IMR-90 (cell line): ENCODE measurements at regions of chr1 and their contacts with region 1.

Region 1: DNA sequence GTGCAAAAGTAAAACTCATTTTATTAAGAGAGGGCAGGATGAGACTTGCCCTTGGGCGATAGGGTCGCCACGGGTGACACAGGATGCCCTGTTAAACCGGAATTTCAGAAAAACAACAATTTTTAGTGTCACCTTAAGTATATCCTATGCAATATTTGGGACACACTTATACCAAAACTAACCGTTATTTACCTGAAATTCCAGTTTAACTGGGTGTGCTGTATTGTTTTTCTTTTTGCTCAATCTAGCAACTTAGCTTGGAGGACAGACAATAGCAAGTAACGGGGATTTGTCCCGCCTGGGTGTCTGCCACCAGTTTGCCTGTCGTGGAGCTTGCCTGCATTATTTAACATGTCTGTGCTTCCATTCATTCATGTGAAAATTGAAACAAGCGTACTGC is 299.8 kb downstream of the SIPA1L2 start:
- DNase-seq: no peak
- ATAC-seq: no peak
- H3K4me3 ChIP-seq: no peak overlapping the region
- H3K27ac ChIP-seq: no peak overlapping the region
- H3K4me1 ChIP-seq: no peaks in the 10 kb centered on the region
- H3K27me3 ChIP-seq: peaks cover 5% of the 10 kb centered on the region
- CTCF ChIP-seq: no peak
- POLR2A ChIP-seq: no peak
- RAD21 ChIP-seq: no peak

Region 2: GRCh38 chr1:232221802-232222499 is 108.2 kb before region 1 on chr1:
- CTCF ChIA-PET with region 1: no interaction called
- POLR2A ChIA-PET with region 1: no interaction called
- dilution Hi-C with region 1: no loop called
- in situ Hi-C with region 1: no loop called
- intact Hi-C with region 1: no loop called
- DNase-seq: peak; percentile 34
- ATAC-seq: no peak
- H3K4me3 ChIP-seq: no peak overlapping the region
- H3K27ac ChIP-seq: no peak overlapping the region
- H3K4me1 ChIP-seq: no peaks in the 10 kb centered on the region
- H3K27me3 ChIP-seq: peaks cover 4% of the 10 kb centered on the region; the same call in 1 of the 2 replicates
- CTCF ChIP-seq: no peak
- POLR2A ChIP-seq: no peak
- RAD21 ChIP-seq: no peak

Region 3: GRCh38 chr1:232355162-232356004 is 25.3 kb after region 1 on chr1:
- CTCF ChIA-PET with region 1: no interaction called
- POLR2A ChIA-PET with region 1: no interaction called
- dilution Hi-C with region 1: no loop called
- in situ Hi-C with region 1: no loop called
- intact Hi-C with region 1: loop called (anchors 2 kb)
- DNase-seq: no peak
- ATAC-seq: no peak
- H3K4me3 ChIP-seq: no peak overlapping the region
- H3K27ac ChIP-seq: no peak overlapping the region
- H3K4me1 ChIP-seq: no peaks in the 10 kb centered on the region
- H3K27me3 ChIP-seq: peaks cover 14% of the 10 kb centered on the region
- CTCF ChIP-seq: no peak
- POLR2A ChIP-seq: no peak
- RAD21 ChIP-seq: no peak